Heart left ventricle (tissue), 16 donors: ENCODE measurements at regions of chrX and their contacts with region 1.

Region 1: GRCh38 chrX:17007206-17007683 is 60.8 kb downstream of the REPS2 start:
- DNase-seq: peak in 2 of 5 donors; percentile 6 to 15
- ATAC-seq: no peak
- H3K4me3 ChIP-seq: no peak overlapping the region
- H3K27ac ChIP-seq: no peak overlapping the region
- H3K4me1 ChIP-seq: no peaks in the 10 kb centered on the region
- H3K27me3 ChIP-seq: peaks cover 0 to 23% (median 0%) of the 10 kb centered on the region in 9 donors
- CTCF ChIP-seq: peak in 7 of 12 donors; percentile 5 to 38 (median 14)
- POLR2A ChIP-seq: no peak

Region 2: DNA sequence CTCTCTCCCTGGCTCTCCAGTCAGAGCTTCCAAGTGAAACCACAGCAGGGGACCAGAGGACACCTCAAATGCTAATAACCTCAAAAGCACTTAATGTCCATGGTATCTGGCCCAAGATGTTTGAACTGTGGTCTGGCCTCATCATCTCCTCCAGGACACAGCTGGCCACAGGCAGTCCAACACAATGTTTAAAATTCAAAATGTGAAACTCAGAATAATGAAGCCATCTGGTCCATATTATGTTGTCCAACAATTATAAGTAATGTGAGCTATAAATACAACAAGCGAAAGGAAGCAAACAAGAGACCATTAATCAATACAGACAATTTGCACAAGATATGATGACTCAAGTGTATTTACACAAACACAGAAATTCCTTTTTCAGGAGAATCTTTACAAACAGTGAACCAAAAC is 448.0 kb before region 1 on chrX:
- intact Hi-C with region 1: no loop called
- DNase-seq: no peak
- ATAC-seq: no peak
- H3K4me3 ChIP-seq: no peak overlapping the region
- H3K27ac ChIP-seq: no peak overlapping the region
- H3K4me1 ChIP-seq: no peaks in the 10 kb centered on the region
- H3K27me3 ChIP-seq: peaks cover 0 to 9% (median 0%) of the 10 kb centered on the region in 9 donors
- CTCF ChIP-seq: no peak
- POLR2A ChIP-seq: no peak

Region 3: GRCh38 chrX:17039826-17040225 is 32.6 kb after region 1 on chrX:
- intact Hi-C with region 1: loop called in 1 of 10 experiments (anchors 5 kb)
- DNase-seq: no peak
- ATAC-seq: no peak
- H3K4me3 ChIP-seq: no peak overlapping the region
- H3K27ac ChIP-seq: no peak overlapping the region
- H3K4me1 ChIP-seq: peaks cover 0 to 12% (median 0%) of the 10 kb centered on the region in 12 donors
- H3K27me3 ChIP-seq: peaks cover 0 to 27% (median 0%) of the 10 kb centered on the region in 9 donors
- CTCF ChIP-seq: no peak
- POLR2A ChIP-seq: no peak

Region 4: DNA sequence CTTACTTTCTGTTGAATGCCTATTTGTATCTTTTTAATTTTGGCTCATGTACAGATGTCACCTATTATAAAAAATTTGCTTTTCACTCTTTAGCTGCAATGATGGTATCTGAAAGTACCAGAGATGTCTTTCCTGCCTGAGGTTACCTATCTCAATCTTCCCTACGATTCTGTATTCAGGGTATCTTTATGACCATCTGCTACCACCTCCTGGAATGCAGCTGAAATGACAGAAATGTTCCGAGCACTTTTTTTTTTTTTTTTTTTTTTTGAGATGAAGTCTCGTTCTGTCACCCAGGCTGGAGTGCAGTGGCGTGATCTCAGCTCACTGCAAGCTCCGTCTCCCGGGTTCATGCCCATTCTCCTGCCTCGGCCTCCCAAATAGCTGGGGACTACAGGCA is 75.6 kb after region 1 on chrX:
- intact Hi-C with region 1: no loop called
- DNase-seq: no peak
- ATAC-seq: no peak
- H3K4me3 ChIP-seq: no peak overlapping the region
- H3K27ac ChIP-seq: no peak overlapping the region
- H3K4me1 ChIP-seq: peaks cover 0 to 9% (median 1%) of the 10 kb centered on the region in 12 donors
- H3K27me3 ChIP-seq: peaks cover 0 to 19% (median 0%) of the 10 kb centered on the region in 9 donors
- CTCF ChIP-seq: no peak
- POLR2A ChIP-seq: no peak